Heart left ventricle (tissue), 16 donors: ENCODE measurements at regions of chr3 and their contacts with region 1.

Region 1: DNA sequence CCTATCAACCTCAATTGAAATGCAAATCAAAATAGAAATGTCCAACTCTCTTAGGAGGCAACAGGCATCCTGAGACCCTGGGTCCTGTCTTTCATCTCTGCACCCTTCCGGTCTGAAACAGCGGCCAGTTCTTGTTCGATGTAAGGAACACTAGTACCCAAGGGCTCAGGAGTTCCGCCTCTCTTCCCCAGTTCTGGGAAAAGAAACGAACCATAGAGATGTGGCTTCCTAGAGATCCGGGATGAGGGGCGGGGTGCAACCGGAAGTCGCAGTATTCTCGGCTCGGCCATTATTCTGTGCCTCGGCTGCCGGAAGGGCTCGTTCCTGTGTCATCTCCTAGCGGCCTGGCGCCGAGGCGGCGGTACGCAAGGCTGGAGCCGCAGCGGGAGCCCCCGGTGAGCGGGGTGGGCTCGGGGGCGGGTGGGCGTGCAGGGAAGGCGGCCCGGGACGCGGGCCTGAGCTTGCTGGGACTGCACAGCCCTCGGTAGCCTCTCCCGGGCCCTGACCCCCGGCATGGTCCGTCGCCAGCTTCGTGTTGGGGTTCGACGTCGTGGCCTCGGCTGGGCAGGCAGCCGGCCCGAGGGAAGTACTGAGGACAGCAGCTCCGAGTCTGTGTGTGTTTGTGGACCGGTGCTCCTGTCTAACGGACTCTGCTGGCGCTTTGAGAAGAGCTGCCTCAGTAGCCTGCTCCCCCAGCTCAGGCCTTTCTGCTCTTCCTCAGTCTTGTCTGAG is at the start of gene ZNF197:
- DNase-seq: peak; percentile 89 to 93 (median 90)
- ATAC-seq: peak; percentile 95 to 99 (median 98)
- H3K4me3 ChIP-seq: peak within 1 kb of the TSS; percentile 70 to 96 (median 92)
- H3K27ac ChIP-seq: peak within 1 kb of the TSS; percentile 75 to 97 (median 93)
- H3K4me1 ChIP-seq: peaks cover 0 to 41% (median 25%) of the 10 kb centered on the region in 12 donors
- H3K27me3 ChIP-seq: no peaks in the 10 kb centered on the region
- CTCF ChIP-seq: peak in 4 of 12 donors; percentile 11 to 52 (median 38)
- POLR2A ChIP-seq: peak in 1 of 2 donors; percentile 43
- total RNA-seq, gene ZNF197: 7.8 to 16.4 (median 11.9) TPM

Region 2: DNA sequence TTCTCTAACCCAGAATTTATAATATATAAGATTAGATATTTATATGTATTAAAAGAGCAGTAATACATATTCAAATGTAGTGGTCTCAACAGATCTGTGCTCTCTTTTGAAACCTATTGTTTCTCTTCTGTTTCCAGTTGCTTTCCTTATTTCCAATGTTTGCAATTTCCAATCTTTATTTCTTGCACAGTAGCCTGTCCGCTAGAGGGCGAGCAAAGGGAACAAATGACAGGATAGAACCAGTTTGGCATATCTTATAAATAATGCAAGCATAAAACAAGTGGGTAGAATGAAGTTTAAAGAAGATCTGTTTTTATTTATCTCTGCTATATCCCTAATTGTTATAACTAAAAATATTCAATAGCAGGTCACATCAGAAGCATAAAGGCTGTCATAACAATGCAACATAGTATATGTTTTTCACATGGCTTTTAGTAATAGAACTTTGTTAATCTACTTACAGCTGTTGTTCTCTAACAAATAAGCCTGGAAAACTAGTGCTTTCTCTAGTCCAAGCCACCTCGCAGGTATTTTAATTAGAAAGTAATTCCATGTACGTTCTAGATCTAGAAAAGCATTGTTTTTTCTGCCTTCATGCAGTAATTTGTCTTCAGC is 301.5 kb before region 1 on chr3:
- intact Hi-C with region 1: loop called in 1 of 10 experiments (anchors 10 kb)
- DNase-seq: peak in 4 of 5 donors; percentile 53 to 73 (median 60)
- ATAC-seq: peak in 2 of 4 donors; percentile 34 to 48
- H3K4me3 ChIP-seq: no peak overlapping the region
- H3K27ac ChIP-seq: no peak overlapping the region
- H3K4me1 ChIP-seq: no peaks in the 10 kb centered on the region
- H3K27me3 ChIP-seq: no peaks in the 10 kb centered on the region
- CTCF ChIP-seq: peak; percentile 60 to 92 (median 82)
- POLR2A ChIP-seq: no peak

Region 3: DNA sequence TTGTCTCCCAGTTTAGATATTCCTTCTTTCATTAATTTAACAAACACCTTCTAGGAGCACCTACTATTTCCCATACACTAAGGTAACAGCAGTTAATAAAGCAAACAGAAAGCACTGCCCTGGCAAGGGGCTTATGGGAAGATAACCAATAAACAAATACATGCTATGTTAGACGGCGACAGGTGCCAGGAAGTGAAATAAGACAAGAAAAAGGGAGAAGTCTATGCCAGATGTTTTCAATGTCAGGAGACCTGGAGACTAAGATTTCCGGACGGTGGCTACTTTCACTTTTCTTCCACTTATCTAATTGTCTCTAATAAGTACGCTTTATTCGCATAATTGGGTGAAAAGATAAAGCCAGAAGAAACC is 114.9 kb before region 1 on chr3:
- intact Hi-C with region 1: loop called in 1 of 10 experiments (anchors 2 kb)
- DNase-seq: no peak
- ATAC-seq: peak in 1 of 4 donors; percentile 5
- H3K4me3 ChIP-seq: peak overlapping the region; percentile 74 to 99 (median 92)
- H3K27ac ChIP-seq: peak overlapping the region; percentile 49 to 94 (median 89)
- H3K4me1 ChIP-seq: peaks cover 0 to 29% (median 14%) of the 10 kb centered on the region in 12 donors
- H3K27me3 ChIP-seq: no peaks in the 10 kb centered on the region
- CTCF ChIP-seq: no peak
- POLR2A ChIP-seq: no peak

Region 4: DNA sequence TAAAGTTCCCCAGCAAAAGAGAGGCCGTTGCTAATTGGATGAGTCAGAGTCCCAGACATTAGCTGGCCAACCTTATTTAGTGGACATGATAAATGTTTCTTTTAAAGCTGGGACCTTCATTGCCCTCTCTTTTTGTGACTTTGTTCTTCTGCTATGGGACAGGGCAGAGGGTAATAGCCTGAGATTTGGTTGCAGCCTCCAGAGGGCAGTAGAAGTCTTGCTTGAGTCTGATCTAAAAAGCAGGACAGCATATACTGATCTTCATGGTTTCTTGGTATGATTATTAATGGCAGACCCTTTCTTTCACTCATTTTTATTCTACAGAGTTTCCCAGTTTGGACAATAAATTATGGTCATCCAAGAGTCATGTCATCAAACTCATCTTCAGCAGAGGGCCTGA is 95.0 kb before region 1 on chr3:
- intact Hi-C with region 1: loop called in 1 of 10 experiments (anchors 10 kb)
- DNase-seq: no peak
- ATAC-seq: no peak
- H3K4me3 ChIP-seq: no peak overlapping the region
- H3K27ac ChIP-seq: no peak overlapping the region
- H3K4me1 ChIP-seq: no peaks in the 10 kb centered on the region
- H3K27me3 ChIP-seq: peaks cover 0 to 40% (median 0%) of the 10 kb centered on the region in 9 donors
- CTCF ChIP-seq: peak in 3 of 12 donors; percentile 4 to 21 (median 4)
- POLR2A ChIP-seq: no peak

Region 5: DNA sequence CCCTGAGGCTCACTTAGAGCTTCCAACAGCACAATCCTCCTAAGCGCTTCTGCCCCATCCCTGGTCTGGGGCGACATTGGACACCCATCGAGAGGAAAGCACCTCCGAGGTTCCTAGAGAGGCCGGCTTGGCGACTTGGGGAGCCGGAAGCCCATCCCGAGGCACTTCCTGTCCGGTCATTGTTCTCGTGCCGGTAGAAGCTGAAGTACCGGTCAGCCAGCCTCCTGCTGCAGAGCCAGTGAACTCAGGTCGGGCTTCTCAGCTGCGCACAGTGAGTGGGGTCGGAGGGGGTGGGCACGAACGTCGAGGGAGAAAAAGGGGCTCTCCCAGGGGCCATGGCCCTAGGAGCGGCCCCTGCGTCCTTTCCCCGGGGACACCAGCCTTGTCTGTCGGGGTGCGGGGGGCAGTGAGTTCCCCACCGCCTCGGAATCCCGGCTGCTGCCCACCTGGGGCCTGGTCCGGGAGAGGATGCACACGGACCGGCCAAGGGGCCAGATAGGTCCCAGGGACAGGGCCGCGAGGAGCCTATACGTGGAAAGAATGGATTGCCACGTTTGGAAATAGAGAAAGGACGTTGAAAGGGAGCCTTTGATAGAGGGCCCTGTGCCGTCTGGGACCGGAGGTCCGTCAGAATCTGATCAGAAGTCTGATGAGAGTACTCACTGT is 23.8 kb after region 1 on chr3 and contains the start of gene ZNF35:
- intact Hi-C with region 1: loop called in 2 of 10 experiments (anchors 2 kb)
- DNase-seq: peak; percentile 75 to 88 (median 85)
- ATAC-seq: peak; percentile 91 to 98 (median 98)
- H3K4me3 ChIP-seq: peak within 1 kb of the TSS; percentile 75 to 99 (median 88)
- H3K27ac ChIP-seq: peak within 1 kb of the TSS in 11 of 12 donors; percentile 56 to 81 (median 76)
- H3K4me1 ChIP-seq: peaks cover 0 to 15% (median 10%) of the 10 kb centered on the region in 12 donors
- H3K27me3 ChIP-seq: no peaks in the 10 kb centered on the region
- CTCF ChIP-seq: no peak
- POLR2A ChIP-seq: peak in 1 of 2 donors; percentile 24
- total RNA-seq, gene ZNF35: 6.0 to 14.6 (median 6.5) TPM